A673 (cell line): ENCODE measurements at regions of chr1 and their contacts with region 1.

Region 1: GRCh38 chr1:24659993-24660665 is 17.0 kb downstream of the SRRM1 start:
- DNase-seq: no peak
- H3K4me3 ChIP-seq: no peak overlapping the region
- H3K27ac ChIP-seq: no peak overlapping the region
- H3K4me1 ChIP-seq: no peaks in the 10 kb centered on the region
- H3K27me3 ChIP-seq: no peaks in the 10 kb centered on the region
- CTCF ChIP-seq: no peak

Region 2: GRCh38 chr1:24601023-24601527 is 59.1 kb before region 1 on chr1:
- CTCF ChIA-PET with region 1: no interaction called
- POLR2A ChIA-PET with region 1: interaction called, 14 read pairs
- intact Hi-C with region 1: no loop called
- DNase-seq: no peak
- H3K4me3 ChIP-seq: no peak overlapping the region
- H3K27ac ChIP-seq: no peak overlapping the region
- H3K4me1 ChIP-seq: no peaks in the 10 kb centered on the region
- H3K27me3 ChIP-seq: no peaks in the 10 kb centered on the region
- CTCF ChIP-seq: no peak

Region 3: GRCh38 chr1:24673336-24673735 is 13.2 kb after region 1 on chr1:
- CTCF ChIA-PET with region 1: interaction called, 3 read pairs
- POLR2A ChIA-PET with region 1: interaction called, 16 read pairs
- intact Hi-C with region 1: no loop called
- DNase-seq: no peak
- H3K4me3 ChIP-seq: no peak overlapping the region
- H3K27ac ChIP-seq: no peak overlapping the region
- H3K4me1 ChIP-seq: no peaks in the 10 kb centered on the region
- H3K27me3 ChIP-seq: no peaks in the 10 kb centered on the region
- CTCF ChIP-seq: no peak